ENCODE measurements at regions of chr2 and their contacts with region 1.

Region 1: GRCh38 chr2:96509114-96509846 is 4.1 kb upstream of the NEURL3 start:
- DNase-seq: no peak
- H3K4me3 ChIP-seq: no peak overlapping the region
- H3K27ac ChIP-seq: no peak overlapping the region
- H3K4me1 ChIP-seq: peaks cover 8 to 23% (median 20%) of the 10 kb centered on the region in 4 donors
- H3K27me3 ChIP-seq: no peaks in the 10 kb centered on the region
- CTCF ChIP-seq: peak; percentile 96 to 100 (median 98)
- EP300 ChIP-seq: no peak
- POLR2A ChIP-seq: no peak

Region 2: GRCh38 chr2:96138179-96139145 is 370.8 kb before region 1 on chr2 and contains the start of gene ASTL:
- intact Hi-C with region 1: loop called (anchors 10 kb)
- DNase-seq: no peak
- H3K4me3 ChIP-seq: no peak within 1 kb of the TSS
- H3K27ac ChIP-seq: no peak within 1 kb of the TSS
- H3K4me1 ChIP-seq: no peaks in the 10 kb centered on the region
- H3K27me3 ChIP-seq: peaks cover 0 to 48% (median 0%) of the 10 kb centered on the region in 4 donors
- CTCF ChIP-seq: peak; percentile 23 to 48 (median 48)
- EP300 ChIP-seq: no peak
- POLR2A ChIP-seq: no peak
- total RNA-seq, gene ASTL: not detected

Region 3: DNA sequence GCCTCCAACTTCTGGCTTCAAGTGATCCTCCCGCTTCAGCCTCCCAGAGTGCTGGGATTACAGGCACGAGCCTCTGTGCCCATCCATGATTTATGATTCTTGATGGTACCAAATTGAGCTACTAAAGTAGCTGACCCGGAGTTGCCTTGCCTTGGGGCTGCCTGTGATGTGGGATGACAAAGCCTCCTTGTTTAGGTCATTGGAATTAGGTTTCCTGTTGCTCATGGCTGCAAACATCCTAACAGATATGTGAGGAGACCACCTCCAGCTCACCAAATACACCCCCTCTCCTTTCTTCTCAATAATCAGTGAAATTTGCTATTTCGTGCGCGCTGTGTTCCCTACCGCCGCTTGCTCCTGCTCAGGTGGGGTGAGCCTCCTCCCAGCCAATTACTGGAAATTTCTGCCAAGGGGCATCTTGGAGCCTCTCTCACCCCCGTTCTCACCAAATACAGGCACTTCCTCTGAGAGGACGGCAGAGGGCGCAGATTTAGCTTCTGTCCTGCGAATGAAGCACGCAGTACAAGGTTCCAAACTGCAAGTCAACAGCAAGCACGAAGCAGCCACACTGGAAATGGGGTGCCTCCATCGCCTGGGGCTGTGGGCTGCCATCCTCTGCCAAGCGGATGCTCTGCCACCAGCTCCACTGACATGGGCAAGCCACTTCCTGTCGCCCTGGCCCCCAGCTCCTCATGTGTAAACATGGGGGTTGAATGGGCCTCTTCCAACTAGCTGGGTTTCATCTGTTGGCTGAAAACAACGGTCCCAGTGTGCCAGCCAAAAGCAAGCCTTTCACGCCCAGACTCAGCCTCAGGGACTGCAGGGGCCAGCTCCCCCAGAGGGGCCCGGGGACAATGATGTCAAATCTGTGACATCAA is 102.0 kb before region 1 on chr2:
- intact Hi-C with region 1: loop called (anchors 1 kb)
- DNase-seq: no peak
- H3K4me3 ChIP-seq: no peak overlapping the region
- H3K27ac ChIP-seq: no peak overlapping the region
- H3K4me1 ChIP-seq: peaks cover 13 to 24% (median 18%) of the 10 kb centered on the region in 4 donors
- H3K27me3 ChIP-seq: peaks cover 0 to 26% (median 0%) of the 10 kb centered on the region in 4 donors
- CTCF ChIP-seq: peak; percentile 74 to 85 (median 74)
- EP300 ChIP-seq: no peak
- POLR2A ChIP-seq: no peak

Region 4: GRCh38 chr2:96470636-96471035 is 38.6 kb before region 1 on chr2:
- intact Hi-C with region 1: loop called (anchors 5 kb)
- DNase-seq: no peak
- H3K4me3 ChIP-seq: peak overlapping the region; percentile 12 to 26 (median 22)
- H3K27ac ChIP-seq: no peak overlapping the region
- H3K4me1 ChIP-seq: peaks cover 0 to 10% (median 6%) of the 10 kb centered on the region in 4 donors
- H3K27me3 ChIP-seq: peaks cover 0 to 17% (median 6%) of the 10 kb centered on the region in 4 donors
- CTCF ChIP-seq: peak; percentile 49 to 58 (median 49)
- EP300 ChIP-seq: no peak
- POLR2A ChIP-seq: no peak